ENCODE measurements at regions of chr13 and their contacts with region 1.

Region 1: DNA sequence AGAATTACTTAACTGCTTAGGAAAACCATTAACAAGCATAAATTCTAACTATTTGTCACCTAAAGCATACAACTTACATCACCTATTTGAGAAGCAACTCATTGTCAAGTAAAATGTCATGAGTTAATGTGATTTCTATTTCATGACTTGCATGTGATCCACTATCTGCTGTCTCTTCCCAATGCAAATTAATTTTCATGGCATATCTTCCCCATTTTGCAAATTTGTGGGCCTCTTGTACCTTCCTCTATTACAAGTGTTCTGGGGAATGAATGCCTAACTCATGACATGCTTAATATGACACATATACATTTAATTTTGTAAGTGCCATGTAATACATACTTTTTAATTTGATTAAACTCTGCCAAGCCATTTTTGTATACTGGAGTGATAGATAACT is 81.1 kb upstream of the EDNRB start:
- DNase-seq: no peak
- H3K4me3 ChIP-seq: no peak overlapping the region
- H3K27ac ChIP-seq: no peak overlapping the region
- H3K4me1 ChIP-seq: no peaks in the 10 kb centered on the region
- H3K27me3 ChIP-seq: no peaks in the 10 kb centered on the region
- CTCF ChIP-seq: no peak

Region 2: GRCh38 chr13:77774181-77774580 is 225.6 kb before region 1 on chr13:
- CTCF ChIA-PET with region 1: no interaction called
- POLR2A ChIA-PET with region 1: no interaction called
- intact Hi-C with region 1: no loop called
- DNase-seq: no peak
- H3K4me3 ChIP-seq: no peak overlapping the region
- H3K27ac ChIP-seq: no peak overlapping the region
- H3K4me1 ChIP-seq: peaks cover 9% of the 10 kb centered on the region
- H3K27me3 ChIP-seq: no peaks in the 10 kb centered on the region
- CTCF ChIP-seq: no peak

Region 3: DNA sequence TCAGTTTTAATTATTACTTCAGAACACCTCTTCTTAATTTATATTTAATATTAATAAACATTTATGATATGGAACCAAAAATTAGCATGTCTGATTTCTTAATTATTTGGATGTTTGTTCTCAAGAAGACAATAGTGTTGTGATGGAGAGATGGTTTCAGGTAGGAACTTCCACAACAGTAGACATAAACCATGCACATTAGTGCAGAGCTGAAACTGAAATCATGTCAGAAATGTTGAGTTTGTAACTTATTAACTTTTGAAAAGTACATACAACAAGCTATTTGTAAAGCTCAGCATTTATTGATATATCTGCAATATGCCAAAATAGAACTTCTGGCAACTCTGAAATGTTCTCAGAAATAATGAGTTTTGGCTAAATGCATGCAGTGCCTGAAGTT is 69.3 kb before region 1 on chr13:
- CTCF ChIA-PET with region 1: no interaction called
- POLR2A ChIA-PET with region 1: no interaction called
- intact Hi-C with region 1: loop called (anchors 2 kb)
- DNase-seq: no peak
- H3K4me3 ChIP-seq: no peak overlapping the region
- H3K27ac ChIP-seq: no peak overlapping the region
- H3K4me1 ChIP-seq: peaks cover 7% of the 10 kb centered on the region
- H3K27me3 ChIP-seq: peaks cover 36% of the 10 kb centered on the region
- CTCF ChIP-seq: no peak

Measured in A673 (cell line).